Psoas muscle (tissue), 8 donors: ENCODE measurements at regions of chr17 and their contacts with region 1.

Region 1: DNA sequence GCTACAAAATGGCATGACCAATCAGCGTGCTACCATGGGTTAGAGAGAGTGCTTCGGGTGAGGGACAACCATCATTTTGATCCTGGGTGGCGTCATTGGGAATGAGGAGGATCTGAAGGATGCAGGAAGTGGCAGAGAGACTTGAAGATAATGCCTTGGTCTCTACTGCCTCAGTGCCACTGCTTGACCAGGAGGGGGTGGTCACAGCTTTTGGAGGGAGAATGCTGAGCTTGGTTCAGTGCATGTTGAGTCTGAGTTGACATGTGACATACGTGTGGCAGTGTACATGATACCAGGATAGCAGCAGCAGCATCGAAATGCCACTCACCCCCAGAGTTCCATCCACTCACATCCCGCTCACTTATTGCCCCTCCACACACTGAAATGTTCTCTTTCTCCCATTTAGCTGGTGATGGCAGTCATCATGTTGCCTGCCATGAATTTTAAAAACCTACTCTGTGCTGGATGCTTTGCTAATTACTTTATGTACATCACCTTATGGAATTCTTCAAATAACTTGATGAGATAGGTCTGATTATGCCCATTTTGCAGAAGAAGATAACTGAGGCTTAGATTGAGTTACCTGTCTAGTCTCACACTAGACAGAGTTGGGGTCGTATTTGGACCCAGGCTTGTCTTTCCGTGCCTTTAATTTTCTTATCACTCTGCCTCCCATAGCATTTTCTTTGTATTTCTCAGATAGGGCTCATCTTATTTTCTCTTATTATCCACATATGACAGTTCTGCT is 36.7 kb downstream of the ARSG start:
- DNase-seq: no peak
- ATAC-seq: no peak
- H3K4me3 ChIP-seq: no peak overlapping the region
- H3K27ac ChIP-seq: no peak overlapping the region
- H3K4me1 ChIP-seq: peaks cover 19% of the 10 kb centered on the region
- H3K27me3 ChIP-seq: no peaks in the 10 kb centered on the region
- CTCF ChIP-seq: no peak

Region 2: GRCh38 chr17:68359791-68360535 is 32.0 kb after region 1 on chr17:
- intact Hi-C with region 1: loop called in 1 of 2 experiments (anchors 5 kb)
- DNase-seq: no peak
- ATAC-seq: no peak
- H3K4me3 ChIP-seq: no peak overlapping the region
- H3K27ac ChIP-seq: no peak overlapping the region
- H3K4me1 ChIP-seq: peaks cover 4% of the 10 kb centered on the region
- H3K27me3 ChIP-seq: no peaks in the 10 kb centered on the region
- CTCF ChIP-seq: no peak

Region 3: GRCh38 chr17:68377862-68378770 is 50.1 kb after region 1 on chr17:
- intact Hi-C with region 1: loop called (anchors 1 to 2 kb)
- DNase-seq: peak; percentile 99
- ATAC-seq: peak; percentile 90 to 94 (median 91)
- H3K4me3 ChIP-seq: peak overlapping the region; percentile 41
- H3K27ac ChIP-seq: peak overlapping the region; percentile 89
- H3K4me1 ChIP-seq: peaks cover 41% of the 10 kb centered on the region
- H3K27me3 ChIP-seq: no peaks in the 10 kb centered on the region
- CTCF ChIP-seq: no peak